ENCODE measurements at regions of chr5 and their contacts with region 1.

Region 1: DNA sequence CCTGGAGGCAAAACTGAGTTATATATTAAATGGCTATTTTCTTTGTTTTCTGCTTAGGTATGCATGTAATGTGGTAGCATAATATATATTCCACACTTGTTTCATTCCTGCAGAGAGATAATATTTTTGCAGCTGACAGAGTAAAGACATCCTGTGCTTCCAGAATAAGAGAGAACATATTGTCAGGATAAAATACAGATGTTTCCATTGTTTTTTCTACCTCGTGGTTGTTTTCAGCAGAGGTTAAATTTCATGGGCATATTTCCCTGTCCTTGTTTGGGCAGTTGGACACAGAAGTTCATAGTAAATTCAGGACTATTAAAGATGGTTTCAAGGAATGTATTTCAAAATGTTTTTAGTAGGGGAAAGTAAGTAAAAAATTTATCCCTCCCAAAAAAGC is 47.6 kb upstream of the MEGF10 start:
- DNase-seq: no peak
- H3K4me3 ChIP-seq: no peak overlapping the region
- H3K27ac ChIP-seq: no peak overlapping the region
- H3K4me1 ChIP-seq: no peaks in the 10 kb centered on the region
- H3K27me3 ChIP-seq: no peaks in the 10 kb centered on the region
- CTCF ChIP-seq: no peak
- EP300 ChIP-seq: no peak
- POLR2A ChIP-seq: no peak

Region 2: DNA sequence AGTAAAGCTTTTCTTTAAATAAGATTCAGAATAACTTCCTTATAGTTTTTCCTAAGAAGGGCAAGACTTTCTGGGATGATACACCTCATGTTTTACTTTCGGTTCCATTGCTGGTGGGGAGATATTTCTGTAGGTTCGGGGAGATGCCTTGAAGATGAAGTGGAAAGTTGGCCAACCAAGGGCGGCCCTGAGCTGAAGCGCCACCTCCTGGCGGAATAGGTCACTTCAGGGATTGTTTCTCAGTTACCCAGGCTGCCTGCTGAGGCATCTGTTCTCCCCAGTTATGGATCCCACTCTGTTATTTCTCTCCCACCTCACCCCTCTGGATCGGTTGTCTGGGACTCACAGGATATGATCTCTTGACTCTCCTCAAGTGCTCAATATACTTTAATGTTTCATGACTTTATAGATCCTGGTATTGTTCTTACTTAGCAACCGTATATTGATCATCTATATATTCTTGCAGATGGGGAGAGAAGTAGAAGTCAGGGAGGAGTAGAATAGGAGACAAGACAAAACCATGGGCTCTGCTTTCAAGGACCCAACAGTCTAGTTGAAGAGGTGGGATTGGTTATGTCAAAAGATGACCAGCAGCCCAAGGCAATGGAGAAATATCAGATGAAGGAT is 70.9 kb after region 1 on chr5:
- in situ Hi-C with region 1: no loop called
- intact Hi-C with region 1: no loop called
- DNase-seq: peak; percentile 72
- H3K4me3 ChIP-seq: no peak overlapping the region
- H3K27ac ChIP-seq: no peak overlapping the region
- H3K4me1 ChIP-seq: peaks cover 0 to 23% (median 4%) of the 10 kb centered on the region in 4 donors
- H3K27me3 ChIP-seq: no peaks in the 10 kb centered on the region
- CTCF ChIP-seq: peak; percentile 66 to 76 (median 66)
- EP300 ChIP-seq: no peak
- POLR2A ChIP-seq: no peak

Region 3: DNA sequence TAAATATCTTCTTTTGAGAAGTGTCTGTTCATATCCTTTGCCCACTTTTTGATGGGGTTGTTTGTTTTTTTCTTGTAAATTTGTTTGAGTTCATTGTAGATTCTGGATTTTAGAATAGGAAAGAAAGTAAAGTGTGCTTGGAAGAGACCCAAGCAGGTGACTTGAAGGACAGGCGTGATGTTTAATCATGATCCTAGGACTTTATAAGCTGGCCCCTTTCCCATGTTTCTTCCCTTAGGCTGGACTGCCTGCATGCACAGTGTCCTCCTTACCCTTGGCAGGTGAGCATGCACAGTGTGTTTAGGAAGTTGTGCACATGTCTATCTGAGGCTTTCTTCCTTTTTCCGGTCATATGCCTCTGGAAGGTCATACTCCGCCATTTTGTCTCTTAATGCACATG is 1912.9 kb after region 1 on chr5:
- in situ Hi-C with region 1: no loop called
- intact Hi-C with region 1: loop called (anchors 10 kb)
- DNase-seq: no peak
- H3K4me3 ChIP-seq: no peak overlapping the region
- H3K27ac ChIP-seq: no peak overlapping the region
- H3K4me1 ChIP-seq: no peaks in the 10 kb centered on the region
- H3K27me3 ChIP-seq: no peaks in the 10 kb centered on the region
- CTCF ChIP-seq: no peak
- EP300 ChIP-seq: no peak
- POLR2A ChIP-seq: no peak